Transverse colon (tissue), 4 donors: ENCODE measurements at regions of chr2 and their contacts with region 1.

Region 1: GRCh38 chr2:119476301-119477021 is 44.8 kb downstream of the TMEM37 start:
- DNase-seq: peak; percentile 53
- H3K4me3 ChIP-seq: no peak overlapping the region
- H3K27ac ChIP-seq: no peak overlapping the region
- H3K4me1 ChIP-seq: peaks cover 0 to 4% (median 3%) of the 10 kb centered on the region in 4 donors
- H3K27me3 ChIP-seq: peaks cover 6% of the 10 kb centered on the region
- CTCF ChIP-seq: peak; percentile 93 to 99 (median 98)
- EP300 ChIP-seq: no peak
- POLR2A ChIP-seq: no peak

Region 2: GRCh38 chr2:119414894-119415293 is 61.6 kb before region 1 on chr2:
- in situ Hi-C with region 1: loop called in 2 of 4 experiments (anchors 5 kb)
- intact Hi-C with region 1: no loop called
- DNase-seq: no peak
- H3K4me3 ChIP-seq: no peak overlapping the region
- H3K27ac ChIP-seq: no peak overlapping the region
- H3K4me1 ChIP-seq: peaks cover 0 to 12% (median 0%) of the 10 kb centered on the region in 4 donors
- H3K27me3 ChIP-seq: no peaks in the 10 kb centered on the region
- CTCF ChIP-seq: no peak
- EP300 ChIP-seq: no peak
- POLR2A ChIP-seq: no peak

Region 3: GRCh38 chr2:119586085-119586484 is 109.6 kb after region 1 on chr2:
- in situ Hi-C with region 1: no loop called
- intact Hi-C with region 1: no loop called
- DNase-seq: no peak
- H3K4me3 ChIP-seq: no peak overlapping the region
- H3K27ac ChIP-seq: no peak overlapping the region
- H3K4me1 ChIP-seq: peaks cover 0 to 4% (median 0%) of the 10 kb centered on the region in 4 donors
- H3K27me3 ChIP-seq: no peaks in the 10 kb centered on the region
- CTCF ChIP-seq: no peak
- EP300 ChIP-seq: no peak
- POLR2A ChIP-seq: no peak